Activated CD8-positive, alpha-beta T cell treated with anti-CD3 and anti-CD28 coated beads, Interleukin-2, amount 10 ng/mL, durations not matched to agents 7 days and 5 days (primary cell): ENCODE measurements at regions of chr15 and their contacts with region 1.

Region 1: DNA sequence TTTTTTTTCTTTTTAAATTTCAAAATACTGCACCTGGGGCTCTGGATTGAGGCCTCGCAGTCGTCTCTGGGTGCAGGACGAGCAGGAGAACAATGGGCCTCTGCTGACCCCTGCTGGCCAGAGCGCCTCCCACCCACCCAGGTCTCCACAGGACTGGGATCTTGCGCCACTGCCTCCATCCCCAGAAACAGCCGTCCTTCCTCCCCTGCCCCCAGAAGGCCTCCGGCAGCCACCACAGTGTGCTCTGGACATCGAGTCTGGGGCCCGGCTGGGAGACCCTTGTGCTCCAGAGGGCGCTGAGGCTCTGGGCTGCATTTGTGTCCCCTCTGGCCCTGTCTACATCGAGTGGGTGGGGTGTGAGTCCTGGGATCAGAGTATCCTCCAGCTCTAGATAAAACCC is 6.6 kb upstream of the ACSBG1 start:
- DNase-seq: peak; percentile 89
- ATAC-seq: peak; percentile 93
- H3K4me3 Mint-ChIP-seq: no peak overlapping the region
- H3K27ac Mint-ChIP-seq: no peak overlapping the region
- H3K4me1 Mint-ChIP-seq: peaks cover 6% of the 10 kb centered on the region
- H3K27me3 Mint-ChIP-seq: peaks cover 2% of the 10 kb centered on the region

Region 2: DNA sequence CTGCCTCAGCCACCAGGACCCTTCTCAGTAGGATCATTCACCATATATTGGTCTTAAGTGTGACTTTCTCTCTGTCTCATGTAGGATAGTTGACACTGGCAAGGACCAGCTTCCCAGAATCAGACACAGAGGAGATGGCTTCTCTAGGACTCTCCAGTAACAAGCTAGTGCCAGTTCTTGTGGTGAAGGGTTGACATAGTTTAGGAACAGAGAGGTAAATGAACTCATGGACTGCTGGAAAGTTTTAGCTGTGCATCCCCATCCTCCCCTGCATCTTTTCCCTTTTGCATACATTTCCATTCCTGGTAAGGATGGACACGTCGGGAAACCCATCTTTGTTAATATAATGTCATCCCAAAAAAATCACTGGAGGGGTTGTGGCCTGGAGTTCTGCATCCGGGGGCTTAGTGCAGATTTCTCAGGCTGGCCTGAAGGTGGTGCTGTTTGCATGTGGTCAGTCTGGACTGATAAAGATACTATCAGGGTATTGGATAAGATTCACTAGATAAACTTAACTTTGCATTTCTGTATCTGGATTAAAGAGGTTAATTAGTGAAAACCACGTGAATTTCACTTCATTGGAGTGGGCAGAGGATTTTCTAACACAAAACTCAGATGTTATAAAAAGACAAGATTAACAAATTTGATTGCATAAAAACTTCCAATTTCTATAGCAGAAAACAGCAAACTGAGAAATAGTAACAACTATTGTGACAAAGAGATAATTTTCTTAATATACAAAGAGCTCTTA is 274.3 kb before region 1 on chr15:
- CTCF ChIA-PET with region 1: interaction called, 23 read pairs
- POLR2A ChIA-PET with region 1: no interaction called
- DNase-seq: peak; percentile 66
- ATAC-seq: peak; percentile 49
- H3K4me3 Mint-ChIP-seq: no peak overlapping the region
- H3K27ac Mint-ChIP-seq: no peak overlapping the region
- H3K4me1 Mint-ChIP-seq: peaks cover 17% of the 10 kb centered on the region
- H3K27me3 Mint-ChIP-seq: peaks cover 28% of the 10 kb centered on the region

Region 3: DNA sequence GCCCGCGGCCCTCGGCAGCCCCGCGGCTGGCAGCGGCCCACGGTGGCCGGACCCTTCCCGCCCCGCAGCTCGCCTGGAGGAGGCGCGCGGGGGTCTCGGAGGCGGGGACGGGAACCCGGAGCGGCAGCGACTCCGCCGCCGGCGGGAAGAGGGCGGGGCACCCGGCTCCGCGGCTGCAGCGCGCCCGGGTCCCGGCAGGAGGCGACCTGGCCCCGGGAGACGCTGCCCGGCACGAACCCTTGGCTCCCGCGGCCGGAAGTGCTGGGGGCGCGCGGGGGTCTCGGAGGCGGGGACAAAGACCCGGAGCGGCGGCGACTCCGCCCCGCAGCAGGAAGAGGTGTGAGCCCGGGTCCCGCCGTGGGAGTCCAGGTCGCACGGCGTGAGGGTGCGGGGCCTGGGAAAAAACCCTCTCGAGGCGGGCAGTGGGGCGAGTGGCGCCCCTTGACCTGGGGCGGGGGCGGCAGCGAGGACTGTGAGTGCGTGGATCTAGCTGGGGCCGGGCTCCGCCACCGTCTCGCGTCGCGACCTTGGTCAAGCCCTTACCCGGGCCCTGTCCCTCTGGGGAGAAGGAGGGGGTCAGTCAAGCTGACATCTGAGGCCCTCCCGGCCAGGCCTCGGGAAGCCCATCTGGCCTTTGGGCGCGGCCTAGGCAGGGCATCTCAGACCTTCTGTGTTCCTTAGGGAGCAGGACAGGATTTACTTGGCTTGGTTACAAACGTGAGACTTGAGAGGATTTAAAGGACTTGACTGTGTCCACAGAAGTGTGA is 109.5 kb before region 1 on chr15 and contains the start of gene CIB2:
- CTCF ChIA-PET with region 1: interaction called, 41 read pairs
- POLR2A ChIA-PET with region 1: no interaction called
- DNase-seq: peak; percentile 79
- ATAC-seq: peak; percentile 90
- H3K4me3 Mint-ChIP-seq: peak within 1 kb of the TSS; percentile 78
- H3K27ac Mint-ChIP-seq: peak within 1 kb of the TSS; percentile 73
- H3K4me1 Mint-ChIP-seq: peaks cover 24% of the 10 kb centered on the region
- H3K27me3 Mint-ChIP-seq: no peaks in the 10 kb centered on the region
- total RNA-seq, gene CIB2: 1.4 to 2.2 TPM

Region 4: GRCh38 chr15:78225783-78226541 is 15.0 kb before region 1 on chr15:
- CTCF ChIA-PET with region 1: interaction called, 25 read pairs
- POLR2A ChIA-PET with region 1: no interaction called
- DNase-seq: no peak
- ATAC-seq: no peak
- H3K4me3 Mint-ChIP-seq: no peak overlapping the region
- H3K27ac Mint-ChIP-seq: no peak overlapping the region
- H3K4me1 Mint-ChIP-seq: peaks cover 5% of the 10 kb centered on the region
- H3K27me3 Mint-ChIP-seq: peaks cover 4% of the 10 kb centered on the region

Region 5: DNA sequence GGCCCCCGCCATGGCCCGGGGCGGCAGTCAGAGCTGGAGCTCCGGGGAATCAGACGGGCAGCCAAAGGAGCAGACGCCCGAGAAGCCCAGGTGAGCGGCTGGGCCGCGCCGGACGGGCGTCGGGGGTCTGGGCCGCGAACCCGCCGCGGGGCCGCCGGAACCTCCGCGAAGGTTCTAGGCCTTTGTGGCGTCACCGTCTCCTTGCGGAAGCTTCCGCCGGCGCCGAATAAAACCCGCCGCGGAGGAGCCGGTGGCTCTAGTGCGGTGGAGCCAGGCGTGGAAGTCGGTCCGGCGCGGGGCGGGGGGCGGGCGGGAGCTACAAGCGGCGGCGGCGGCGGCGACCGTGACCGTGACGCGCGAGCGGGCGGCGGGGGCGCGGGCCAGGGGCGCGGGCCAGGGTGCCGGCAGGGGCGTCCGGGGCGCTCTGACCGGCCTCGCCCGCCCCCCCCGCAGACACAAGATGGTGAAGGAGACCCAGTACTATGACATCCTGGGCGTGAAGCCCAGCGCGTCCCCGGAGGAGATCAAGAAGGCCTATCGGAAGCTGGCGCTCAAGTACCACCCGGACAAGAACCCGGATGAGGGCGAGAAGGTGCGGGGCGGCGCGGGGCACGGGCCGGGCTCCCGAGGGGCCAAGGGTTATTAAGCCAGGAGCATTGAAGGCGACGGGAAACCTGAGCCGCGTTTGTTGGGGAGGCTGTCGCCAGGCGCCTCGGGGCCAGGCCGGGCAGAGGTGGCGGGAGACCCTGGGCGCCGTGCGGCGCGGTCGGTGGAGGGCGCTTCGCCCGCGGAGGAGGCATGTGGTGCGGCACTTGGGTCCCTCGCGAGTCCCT is 23.5 kb after region 1 on chr15 and contains the start of gene DNAJA4:
- CTCF ChIA-PET with region 1: interaction called, 19 read pairs
- POLR2A ChIA-PET with region 1: no interaction called
- DNase-seq: peak; percentile 73
- ATAC-seq: peak; percentile 76
- H3K4me3 Mint-ChIP-seq: peak within 1 kb of the TSS; percentile 73
- H3K27ac Mint-ChIP-seq: peak within 1 kb of the TSS; percentile 82
- H3K4me1 Mint-ChIP-seq: peaks cover 29% of the 10 kb centered on the region
- H3K27me3 Mint-ChIP-seq: peaks cover 2% of the 10 kb centered on the region
- total RNA-seq, gene DNAJA4: 29.7 TPM

Region 6: DNA sequence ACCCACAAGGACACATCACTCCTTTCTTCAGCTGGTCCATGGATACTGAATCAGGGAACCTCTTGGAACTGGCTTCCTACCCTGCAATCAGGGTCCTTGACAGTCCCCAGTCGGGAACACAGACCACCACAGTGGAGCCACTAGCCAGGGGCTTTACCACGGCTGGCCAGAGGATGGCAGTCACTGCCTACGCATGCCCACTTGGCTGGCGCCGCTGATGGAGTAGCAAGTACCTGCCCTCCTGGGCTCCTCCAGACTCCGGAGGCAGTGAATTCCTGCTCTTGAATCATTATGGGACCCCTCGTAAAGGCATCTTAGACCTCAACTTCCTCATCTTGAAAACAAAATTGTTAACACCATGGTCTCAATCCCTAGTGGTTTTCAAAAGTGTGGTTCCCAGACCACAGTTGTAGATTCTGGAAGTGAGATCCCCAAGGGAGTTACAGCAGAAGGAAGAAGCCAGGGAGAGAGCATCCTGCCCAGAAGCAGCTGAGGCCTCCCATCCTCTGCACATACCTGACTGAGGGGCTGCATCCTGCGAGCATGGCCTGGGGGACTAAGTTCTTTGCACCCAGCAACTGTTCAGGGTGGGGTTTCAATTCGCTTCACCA is 67.5 kb after region 1 on chr15:
- CTCF ChIA-PET with region 1: no interaction called
- POLR2A ChIA-PET with region 1: no interaction called
- DNase-seq: peak; percentile 76
- ATAC-seq: peak; percentile 90
- H3K4me3 Mint-ChIP-seq: no peak overlapping the region
- H3K27ac Mint-ChIP-seq: no peak overlapping the region
- H3K4me1 Mint-ChIP-seq: no peaks in the 10 kb centered on the region
- H3K27me3 Mint-ChIP-seq: no peaks in the 10 kb centered on the region